Natural killer cell (primary cell): ENCODE measurements at regions of chr6 and their contacts with region 1.

Region 1: DNA sequence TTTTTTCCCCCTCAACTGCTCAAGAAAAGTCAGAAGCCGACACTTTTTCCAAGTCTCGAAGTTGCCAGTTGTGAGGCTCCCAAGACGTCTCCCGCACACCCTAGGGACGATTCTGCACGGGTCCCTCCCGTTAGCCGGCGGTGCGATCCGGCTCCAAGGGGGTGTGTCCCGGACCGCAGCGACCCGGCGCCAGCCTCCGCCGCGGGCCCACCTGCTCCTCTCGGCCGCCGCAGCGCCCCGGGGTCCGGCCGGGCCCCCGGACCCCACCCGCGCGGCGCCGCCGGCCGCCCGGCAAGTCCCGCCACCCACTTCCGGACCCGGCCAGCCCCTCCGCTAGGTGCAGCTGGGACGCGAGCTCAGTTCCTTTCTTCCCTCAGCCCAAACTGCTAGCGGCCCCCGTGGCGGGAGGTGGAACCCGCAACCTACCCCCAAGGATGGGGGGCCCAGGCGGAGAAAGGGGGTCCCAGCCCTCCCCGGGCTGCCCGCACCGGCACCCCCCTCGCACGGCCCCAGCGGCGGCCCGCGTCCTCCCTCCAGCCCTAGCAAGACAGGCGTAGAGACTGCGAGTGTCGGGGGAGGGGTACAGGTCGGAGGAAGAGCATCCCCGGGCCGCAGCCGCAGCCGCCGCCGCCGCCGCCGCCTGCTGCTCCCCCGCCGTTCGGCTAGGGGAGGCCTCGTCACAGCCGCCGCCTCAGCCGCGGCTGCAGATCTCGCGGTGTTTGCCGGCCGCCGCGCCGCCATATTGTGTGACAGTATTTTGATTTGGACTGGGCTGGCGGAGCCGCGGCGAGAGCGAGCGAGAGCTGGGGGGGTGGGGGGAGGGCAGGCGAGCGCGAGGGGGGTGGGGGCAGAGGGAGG is 485 bp upstream of the TAB2 start:
- DNase-seq: peak; percentile 83 to 94
- ATAC-seq: peak; percentile 78 to 91 (median 87)
- H3K4me3 ChIP-seq: peak overlapping the region; percentile 71
- H3K4me3 Mint-ChIP-seq: peak overlapping the region; percentile 87
- H3K27ac ChIP-seq: peak overlapping the region; percentile 84
- H3K27ac Mint-ChIP-seq: peak overlapping the region; percentile 75 to 92
- H3K4me1 ChIP-seq: peaks cover 9% of the 10 kb centered on the region
- H3K4me1 Mint-ChIP-seq: peaks cover 24 to 29% of the 10 kb centered on the region in 2 donors
- H3K27me3 ChIP-seq: no peaks in the 10 kb centered on the region
- H3K27me3 Mint-ChIP-seq: peaks cover 0 to 4% of the 10 kb centered on the region in 2 donors
- CTCF ChIP-seq: no peak

Region 2: DNA sequence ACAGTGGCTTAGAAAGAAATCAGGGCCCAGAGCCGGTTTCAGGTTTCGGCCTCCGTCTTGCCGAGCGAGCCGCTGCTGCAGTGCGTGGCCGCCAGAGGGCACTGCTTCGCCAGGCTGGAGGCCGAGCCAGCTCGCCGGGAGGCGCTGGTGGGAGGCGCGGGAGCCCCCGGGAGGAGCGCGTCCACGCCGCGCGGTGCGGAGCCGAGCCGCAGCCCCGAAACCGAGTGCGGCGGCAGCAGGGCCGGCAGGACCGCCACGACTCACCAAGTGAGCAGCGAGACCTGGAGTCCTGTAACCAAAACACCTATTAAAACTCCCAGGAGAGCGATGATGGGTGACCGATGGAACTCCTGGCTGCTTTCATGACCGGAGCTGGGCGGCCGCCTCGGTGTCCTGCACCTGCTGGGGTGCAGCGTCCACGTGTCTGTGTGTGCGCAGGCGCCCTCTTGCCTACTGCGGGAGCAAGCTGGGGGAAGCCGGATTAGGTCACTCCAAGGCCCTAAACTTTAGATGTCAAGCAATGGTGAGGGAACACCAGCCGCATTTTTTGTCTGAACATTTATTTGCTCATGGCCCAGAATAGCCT is 757.1 kb before region 1 on chr6:
- intact Hi-C with region 1: loop called (anchors 10 kb)
- DNase-seq: peak; percentile 71 to 83
- ATAC-seq: peak; percentile 87 to 93 (median 92)
- H3K4me3 ChIP-seq: no peak overlapping the region
- H3K4me3 Mint-ChIP-seq: no peak overlapping the region
- H3K27ac ChIP-seq: no peak overlapping the region
- H3K27ac Mint-ChIP-seq: no peak overlapping the region
- H3K4me1 ChIP-seq: peaks cover 25% of the 10 kb centered on the region
- H3K4me1 Mint-ChIP-seq: peaks cover 9 to 15% of the 10 kb centered on the region in 2 donors
- H3K27me3 ChIP-seq: peaks cover 30% of the 10 kb centered on the region
- H3K27me3 Mint-ChIP-seq: peaks cover 41 to 78% of the 10 kb centered on the region in 2 donors
- CTCF ChIP-seq: peak; percentile 98

Region 3: DNA sequence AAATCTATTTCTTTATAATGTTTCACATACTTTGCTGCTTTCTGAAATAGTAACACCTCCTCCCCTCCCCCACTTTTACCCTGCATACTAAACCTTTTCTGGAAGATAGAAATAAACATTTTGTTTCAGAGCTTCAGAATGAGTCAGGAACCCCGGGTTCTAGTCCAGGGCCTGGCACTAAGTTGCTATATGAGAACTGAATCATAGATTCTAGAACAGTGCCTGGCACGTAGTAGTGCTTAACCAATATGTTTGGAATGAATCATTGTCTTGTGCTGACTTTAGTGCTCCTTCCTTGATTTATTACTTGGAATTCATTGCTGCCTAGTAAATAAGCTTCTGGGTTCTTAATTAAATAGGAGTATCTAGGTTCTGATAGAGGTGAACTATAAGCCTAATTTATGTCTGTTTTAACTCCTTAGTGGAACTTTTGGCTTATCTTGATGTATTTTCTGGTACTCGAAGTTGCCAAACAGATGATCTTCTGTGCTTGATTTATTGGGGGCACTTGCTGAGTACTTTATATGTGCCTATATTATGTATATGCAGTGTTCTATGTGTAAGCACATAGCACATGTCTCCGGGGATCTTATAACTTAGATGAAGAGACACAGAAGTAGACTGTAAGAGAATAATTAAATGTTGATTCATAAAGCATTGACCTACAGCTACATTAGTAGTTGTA is 19.0 kb after region 1 on chr6:
- intact Hi-C with region 1: loop called (anchors 2 kb)
- DNase-seq: no peak
- ATAC-seq: peak in 1 of 3 donors; percentile 53
- H3K4me3 ChIP-seq: no peak overlapping the region
- H3K4me3 Mint-ChIP-seq: peak overlapping the region; percentile 9
- H3K27ac ChIP-seq: no peak overlapping the region
- H3K27ac Mint-ChIP-seq: peak overlapping the region; percentile 6 to 45
- H3K4me1 ChIP-seq: no peaks in the 10 kb centered on the region
- H3K4me1 Mint-ChIP-seq: peaks cover 71 to 73% of the 10 kb centered on the region in 2 donors
- H3K27me3 ChIP-seq: no peaks in the 10 kb centered on the region
- H3K27me3 Mint-ChIP-seq: no peaks in the 10 kb centered on the region
- CTCF ChIP-seq: no peak

Region 4: GRCh38 chr6:149368065-149368464 is 51.0 kb after region 1 on chr6:
- intact Hi-C with region 1: loop called (anchors 5 kb)
- DNase-seq: no peak
- ATAC-seq: peak in 1 of 3 donors; percentile 32
- H3K4me3 ChIP-seq: no peak overlapping the region
- H3K4me3 Mint-ChIP-seq: no peak overlapping the region
- H3K27ac ChIP-seq: no peak overlapping the region
- H3K27ac Mint-ChIP-seq: no peak overlapping the region
- H3K4me1 ChIP-seq: no peaks in the 10 kb centered on the region
- H3K4me1 Mint-ChIP-seq: peaks cover 24 to 27% of the 10 kb centered on the region in 2 donors
- H3K27me3 ChIP-seq: no peaks in the 10 kb centered on the region
- H3K27me3 Mint-ChIP-seq: no peaks in the 10 kb centered on the region
- CTCF ChIP-seq: no peak

Region 5: DNA sequence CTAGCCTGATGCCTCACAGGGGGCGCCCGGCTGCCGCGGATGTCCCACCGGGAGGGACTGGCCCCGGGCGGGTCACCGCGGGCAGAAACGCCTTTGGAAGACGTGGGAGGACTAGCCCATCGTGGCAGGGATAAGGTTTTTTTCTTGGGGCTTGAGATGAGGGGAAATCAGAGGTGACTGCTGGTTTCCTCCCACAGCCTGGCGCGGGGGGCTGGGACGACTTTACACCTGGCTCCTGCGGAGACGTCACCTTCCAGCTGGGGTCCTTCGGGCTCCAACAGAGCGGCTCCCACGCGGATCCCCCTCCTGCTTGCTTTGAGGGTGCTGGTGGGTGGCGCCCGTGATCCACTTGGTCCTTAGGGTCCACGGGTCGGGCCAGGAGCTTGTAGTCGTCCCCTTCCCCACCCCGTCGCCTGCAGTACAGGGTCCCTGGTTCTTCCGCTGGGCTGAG is 740.5 kb after region 1 on chr6:
- intact Hi-C with region 1: no loop called
- DNase-seq: no peak
- ATAC-seq: no peak
- H3K4me3 ChIP-seq: no peak overlapping the region
- H3K4me3 Mint-ChIP-seq: no peak overlapping the region
- H3K27ac ChIP-seq: no peak overlapping the region
- H3K27ac Mint-ChIP-seq: no peak overlapping the region
- H3K4me1 ChIP-seq: peaks cover 7% of the 10 kb centered on the region
- H3K4me1 Mint-ChIP-seq: peaks cover 9 to 11% of the 10 kb centered on the region in 2 donors
- H3K27me3 ChIP-seq: peaks cover 4% of the 10 kb centered on the region
- H3K27me3 Mint-ChIP-seq: peaks cover 37 to 43% of the 10 kb centered on the region in 2 donors
- CTCF ChIP-seq: no peak